Posterior cingulate gyrus (tissue), 11 donors: ENCODE measurements at regions of chr19 and their contacts with region 1.

Region 1: DNA sequence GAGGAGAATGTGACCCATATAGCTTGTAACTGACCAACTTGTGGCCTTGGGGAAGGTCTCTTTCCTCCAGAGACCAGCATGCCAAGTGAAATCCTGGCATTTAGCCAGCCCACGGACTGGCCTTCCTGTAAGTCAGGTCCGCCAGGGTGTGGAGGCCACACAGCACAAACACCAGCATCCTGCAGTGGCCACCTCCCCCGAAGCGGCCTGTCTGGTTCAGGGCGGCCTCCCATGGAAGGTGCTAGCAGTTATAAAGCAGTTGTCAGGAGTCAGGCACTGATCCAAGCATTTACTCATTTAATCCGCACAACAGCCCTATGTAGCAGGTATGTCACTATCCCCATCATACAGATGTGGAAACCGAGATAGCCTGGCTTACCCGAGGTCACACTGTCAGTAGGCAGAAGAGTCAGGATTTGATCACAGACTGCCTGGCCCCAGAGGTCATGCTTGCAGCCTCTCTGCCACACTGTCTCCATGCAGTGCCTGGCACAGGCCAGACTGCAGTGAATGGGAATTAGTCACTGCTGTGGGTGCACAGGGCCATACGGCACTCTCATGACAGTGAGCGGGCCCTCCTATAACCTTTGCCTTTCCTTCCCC is 36.7 kb downstream of the CAPN12 start:
- DNase-seq: no peak

Region 2: GRCh38 chr19:38718747-38719543 is 11.3 kb after region 1 on chr19:
- intact Hi-C with region 1: loop called (anchors 1 kb)
- DNase-seq: peak in 9 of 10 donors; percentile 47 to 96 (median 66)

Region 3: DNA sequence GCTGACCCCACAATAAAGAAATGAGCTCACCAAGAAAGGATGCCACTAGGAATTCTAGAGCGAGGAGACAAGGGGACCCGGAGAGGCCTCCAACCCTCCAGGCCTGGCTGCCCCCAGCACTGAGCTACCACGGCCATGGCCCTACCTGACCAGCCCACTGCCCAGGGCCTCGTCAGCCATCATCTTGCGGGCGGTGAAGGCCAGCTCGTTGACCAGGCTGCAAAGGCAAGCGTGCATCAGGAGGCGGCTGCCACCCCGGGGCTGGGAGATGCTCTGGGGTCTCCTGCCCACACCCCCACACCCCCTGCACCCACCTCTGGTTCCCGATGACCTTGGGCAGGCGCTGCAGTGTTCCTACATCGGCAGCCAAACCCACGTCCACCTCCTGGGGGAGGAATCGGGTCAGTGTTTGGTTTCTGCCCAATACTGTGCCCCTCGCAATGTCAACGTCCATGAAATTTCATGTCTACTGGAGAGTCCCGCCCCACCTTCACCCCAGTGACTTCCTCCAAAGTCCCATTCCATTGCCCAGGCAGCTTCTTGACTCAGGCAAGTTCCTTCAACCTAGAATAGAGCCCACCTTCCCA is 108.6 kb after region 1 on chr19:
- intact Hi-C with region 1: no loop called
- DNase-seq: peak in 2 of 10 donors; percentile 57 to 60